Left cardiac atrium (tissue), 4 donors: ENCODE measurements at regions of chr12 and their contacts with region 1.

Region 1: DNA sequence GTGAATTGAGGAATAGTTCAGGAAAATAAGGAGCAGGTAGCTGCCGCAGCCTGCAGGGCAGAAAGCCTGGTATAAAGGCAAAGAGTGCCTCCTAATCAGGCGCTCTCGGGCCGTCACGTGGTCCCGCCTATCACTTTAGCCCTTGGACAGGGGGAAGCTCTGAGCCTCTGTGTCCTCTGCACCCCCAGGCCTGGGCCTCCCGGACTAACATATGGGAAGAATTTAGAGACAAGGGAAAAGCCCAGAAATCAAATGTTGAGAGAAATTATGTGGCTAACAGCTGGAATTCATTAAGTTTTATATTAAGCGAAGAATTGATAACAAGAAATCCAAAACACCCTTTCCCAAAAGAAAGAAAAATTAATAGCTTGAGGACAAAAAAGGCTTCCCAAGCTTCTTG is 417.7 kb downstream of the ATP23 start:
- DNase-seq: no peak
- ATAC-seq: no peak

Region 2: GRCh38 chr12:58529897-58530741 is 171.0 kb after region 1 on chr12:
- intact Hi-C with region 1: loop called in 1 of 2 experiments (anchors 10 kb)
- DNase-seq: no peak
- ATAC-seq: peak in 1 of 2 donors; percentile 96